SK-N-SH (cell line): ENCODE measurements at regions of chr2 and their contacts with region 1.

Region 1: GRCh38 chr2:177489719-177490301 is 97.2 kb downstream of the AGPS start:
- DNase-seq: peak; percentile 58
- H3K4me3 ChIP-seq: no peak overlapping the region
- H3K27ac ChIP-seq: 0 out of 4 replicates have a peak overlapping the region, but pooled peaks of 1 of the 2 experiments have one; percentile 14
- H3K4me1 ChIP-seq: no peaks in the 10 kb centered on the region; a peak in 1 of 4 replicates
- H3K27me3 ChIP-seq: no peaks in the 10 kb centered on the region
- CTCF ChIP-seq: peak; percentile 75
- EP300 ChIP-seq: no peak
- RAD21 ChIP-seq: peak; percentile 90

Region 2: GRCh38 chr2:177338177-177338721 is 151.6 kb before region 1 on chr2:
- CTCF ChIA-PET with region 1: interaction called, 16 read pairs
- POLR2A ChIA-PET with region 1: no interaction called
- DNase-seq: no peak
- H3K4me3 ChIP-seq: no peak overlapping the region
- H3K27ac ChIP-seq: peak overlapping the region in 1 of 2 experiments; percentile 17; a peak in 1 of 4 replicates
- H3K4me1 ChIP-seq: peaks cover 4 to 14% of the 10 kb centered on the region in 2 experiments; a peak in 2 of 4 replicates
- H3K27me3 ChIP-seq: no peaks in the 10 kb centered on the region
- CTCF ChIP-seq: no peak
- EP300 ChIP-seq: no peak
- RAD21 ChIP-seq: no peak

Region 3: GRCh38 chr2:177519534-177520355 is 29.9 kb after region 1 on chr2:
- CTCF ChIA-PET with region 1: interaction called, 10 read pairs
- POLR2A ChIA-PET with region 1: no interaction called
- DNase-seq: no peak
- H3K4me3 ChIP-seq: no peak overlapping the region
- H3K27ac ChIP-seq: peak overlapping the region in 1 of 2 experiments; percentile 85; a peak in 2 of 4 replicates
- H3K4me1 ChIP-seq: peaks cover 8 to 13% of the 10 kb centered on the region in 2 experiments; a peak in 3 of 4 replicates
- H3K27me3 ChIP-seq: no peaks in the 10 kb centered on the region
- CTCF ChIP-seq: no peak
- EP300 ChIP-seq: no peak
- RAD21 ChIP-seq: no peak

Region 4: GRCh38 chr2:177547122-177547521 is 57.3 kb after region 1 on chr2:
- CTCF ChIA-PET with region 1: interaction called, 17 read pairs
- POLR2A ChIA-PET with region 1: no interaction called
- DNase-seq: no peak
- H3K4me3 ChIP-seq: no peak overlapping the region
- H3K27ac ChIP-seq: peak overlapping the region in 1 of 2 experiments; percentile 91; a peak in 1 of 4 replicates
- H3K4me1 ChIP-seq: peaks cover 0 to 25% of the 10 kb centered on the region in 2 experiments; a peak in 2 of 4 replicates
- H3K27me3 ChIP-seq: no peaks in the 10 kb centered on the region
- CTCF ChIP-seq: no peak
- EP300 ChIP-seq: no peak
- RAD21 ChIP-seq: no peak

Region 5: DNA sequence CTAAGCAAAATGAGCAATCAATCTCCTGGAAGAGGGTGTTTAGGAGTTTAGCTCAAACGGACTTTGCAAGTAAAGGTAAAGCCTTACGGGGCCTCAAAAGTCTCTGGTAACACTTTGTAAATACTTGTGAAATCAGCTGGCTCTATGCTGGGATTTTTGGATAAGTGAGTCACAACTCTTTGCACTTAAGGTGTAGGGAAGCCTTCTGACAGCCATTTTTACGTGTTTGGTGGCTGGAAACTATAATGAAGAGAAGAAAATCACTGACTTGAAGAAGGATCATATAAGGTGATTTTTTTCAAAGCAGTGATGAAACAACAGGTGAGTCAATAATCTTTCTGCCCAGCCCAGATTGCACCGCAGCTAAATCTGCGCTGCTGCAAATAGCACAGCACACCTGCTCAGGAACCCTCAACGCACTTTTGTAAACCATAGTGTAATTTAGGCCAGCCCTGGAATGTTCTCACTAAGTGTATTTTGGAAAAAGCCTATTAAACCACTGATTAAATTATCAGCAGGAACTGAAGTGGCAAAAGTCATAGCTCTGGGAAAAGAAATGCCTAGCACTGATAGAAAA is 121.6 kb after region 1 on chr2:
- CTCF ChIA-PET with region 1: interaction called, 21 read pairs
- POLR2A ChIA-PET with region 1: no interaction called
- DNase-seq: no peak
- H3K4me3 ChIP-seq: no peak overlapping the region
- H3K27ac ChIP-seq: no peak overlapping the region
- H3K4me1 ChIP-seq: peaks cover 0 to 11% of the 10 kb centered on the region in 2 experiments; a peak in 3 of 4 replicates
- H3K27me3 ChIP-seq: no peaks in the 10 kb centered on the region
- CTCF ChIP-seq: no peak
- EP300 ChIP-seq: no peak
- RAD21 ChIP-seq: no peak

Region 6: GRCh38 chr2:177724398-177725287 is 234.8 kb after region 1 on chr2:
- CTCF ChIA-PET with region 1: interaction called, 45 read pairs
- POLR2A ChIA-PET with region 1: no interaction called
- DNase-seq: peak; percentile 60
- H3K4me3 ChIP-seq: peak overlapping the region in 1 of 2 experiments; percentile 53; a peak in 1 of 4 replicates
- H3K27ac ChIP-seq: no peak overlapping the region; a peak in 1 of 4 replicates
- H3K4me1 ChIP-seq: peaks cover 0 to 7% of the 10 kb centered on the region in 2 experiments; a peak in 1 of 4 replicates
- H3K27me3 ChIP-seq: no peaks in the 10 kb centered on the region
- CTCF ChIP-seq: peak; percentile 98
- EP300 ChIP-seq: no peak
- RAD21 ChIP-seq: peak; percentile 95

Region 7: DNA sequence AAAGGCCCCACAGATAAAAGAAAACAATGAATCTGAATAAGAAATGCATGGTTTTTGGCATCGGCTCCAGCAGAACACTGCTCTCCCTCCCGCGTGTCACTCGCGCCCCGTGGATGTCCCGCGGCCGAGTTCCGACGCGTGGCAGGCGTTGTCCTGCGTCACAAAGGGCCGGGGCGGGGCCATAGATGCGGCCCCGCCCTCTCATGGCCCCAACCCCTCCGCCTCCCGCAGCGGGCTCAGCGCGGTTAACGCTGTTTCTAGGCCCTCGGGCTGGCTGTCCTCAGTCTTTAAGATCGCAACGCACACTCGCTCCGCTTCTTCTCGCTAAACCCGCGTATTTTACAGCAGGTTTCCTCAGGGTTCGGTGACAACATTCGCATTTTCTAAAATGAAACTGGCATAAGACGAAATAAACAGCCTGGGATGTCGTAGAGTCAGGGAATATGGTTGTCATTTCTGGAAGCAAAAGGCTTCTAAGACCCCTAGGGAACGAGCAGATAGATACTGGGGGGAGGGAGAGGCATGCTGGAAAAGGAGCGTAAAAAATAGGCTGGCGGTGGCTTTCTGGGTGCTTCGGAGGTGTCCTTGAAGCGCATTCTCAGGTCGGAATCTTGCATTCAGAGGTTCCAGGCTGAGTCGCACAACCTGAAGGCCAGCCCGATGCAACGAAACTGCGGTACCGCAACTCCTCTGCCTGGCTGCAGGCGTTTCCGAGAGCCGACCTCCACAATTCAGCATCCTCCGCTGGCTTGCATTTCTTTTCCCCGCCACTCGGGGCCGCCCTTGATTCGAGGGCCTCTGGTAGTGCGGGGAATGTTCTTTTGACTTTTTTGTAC is 988.8 kb after region 1 on chr2 and contains the start of gene FKBP7:
- CTCF ChIA-PET with region 1: no interaction called
- POLR2A ChIA-PET with region 1: no interaction called
- DNase-seq: peak; percentile 90
- H3K4me3 ChIP-seq: peak within 1 kb of the TSS; percentile 62 to 93
- H3K27ac ChIP-seq: peak within 1 kb of the TSS; percentile 78 to 91
- H3K4me1 ChIP-seq: peaks cover 17 to 21% of the 10 kb centered on the region in 2 experiments
- H3K27me3 ChIP-seq: no peaks in the 10 kb centered on the region
- CTCF ChIP-seq: peak; percentile 55
- EP300 ChIP-seq: no peak
- RAD21 ChIP-seq: no peak
- polyA plus RNA-seq, gene FKBP7: 34.7 and 35.6 TPM in 2 replicates